Spleen (tissue), 13 donors: ENCODE measurements at regions of chr9 and their contacts with region 1.

Region 1: GRCh38 chr9:33852216-33852826 is 35.4 kb downstream of the UBE2R2 start:
- DNase-seq: peak; percentile 81
- H3K4me3 ChIP-seq: no peak overlapping the region
- H3K27ac ChIP-seq: peak overlapping the region in 2 of 8 donors; percentile 51 to 53
- H3K4me1 ChIP-seq: peaks cover 10 to 86% (median 44%) of the 10 kb centered on the region in 6 donors
- H3K27me3 ChIP-seq: no peaks in the 10 kb centered on the region
- CTCF ChIP-seq: peak in 9 of 11 experiments; percentile 14 to 66 (median 57)
- POLR2A ChIP-seq: no peak

Region 2: GRCh38 chr9:33813712-33814641 is 38.3 kb before region 1 on chr9:
- intact Hi-C with region 1: loop called (anchors 5 kb)
- DNase-seq: no peak
- H3K4me3 ChIP-seq: peak overlapping the region in 1 of 8 donors; percentile 92
- H3K27ac ChIP-seq: peak overlapping the region in 7 of 8 donors; percentile 98 to 100 (median 99)
- H3K4me1 ChIP-seq: peaks cover 20 to 44% (median 39%) of the 10 kb centered on the region in 6 donors
- H3K27me3 ChIP-seq: no peaks in the 10 kb centered on the region
- CTCF ChIP-seq: peak; percentile 29 to 83 (median 60)
- POLR2A ChIP-seq: no peak

Region 3: GRCh38 chr9:34035656-34036055 is 183.3 kb after region 1 on chr9:
- intact Hi-C with region 1: no loop called
- DNase-seq: no peak
- H3K4me3 ChIP-seq: no peak overlapping the region
- H3K27ac ChIP-seq: no peak overlapping the region
- H3K4me1 ChIP-seq: no peaks in the 10 kb centered on the region
- H3K27me3 ChIP-seq: no peaks in the 10 kb centered on the region
- CTCF ChIP-seq: no peak
- POLR2A ChIP-seq: no peak